GM10248 (cell line): ENCODE measurements at regions of chr3 and their contacts with region 1.

Region 1: DNA sequence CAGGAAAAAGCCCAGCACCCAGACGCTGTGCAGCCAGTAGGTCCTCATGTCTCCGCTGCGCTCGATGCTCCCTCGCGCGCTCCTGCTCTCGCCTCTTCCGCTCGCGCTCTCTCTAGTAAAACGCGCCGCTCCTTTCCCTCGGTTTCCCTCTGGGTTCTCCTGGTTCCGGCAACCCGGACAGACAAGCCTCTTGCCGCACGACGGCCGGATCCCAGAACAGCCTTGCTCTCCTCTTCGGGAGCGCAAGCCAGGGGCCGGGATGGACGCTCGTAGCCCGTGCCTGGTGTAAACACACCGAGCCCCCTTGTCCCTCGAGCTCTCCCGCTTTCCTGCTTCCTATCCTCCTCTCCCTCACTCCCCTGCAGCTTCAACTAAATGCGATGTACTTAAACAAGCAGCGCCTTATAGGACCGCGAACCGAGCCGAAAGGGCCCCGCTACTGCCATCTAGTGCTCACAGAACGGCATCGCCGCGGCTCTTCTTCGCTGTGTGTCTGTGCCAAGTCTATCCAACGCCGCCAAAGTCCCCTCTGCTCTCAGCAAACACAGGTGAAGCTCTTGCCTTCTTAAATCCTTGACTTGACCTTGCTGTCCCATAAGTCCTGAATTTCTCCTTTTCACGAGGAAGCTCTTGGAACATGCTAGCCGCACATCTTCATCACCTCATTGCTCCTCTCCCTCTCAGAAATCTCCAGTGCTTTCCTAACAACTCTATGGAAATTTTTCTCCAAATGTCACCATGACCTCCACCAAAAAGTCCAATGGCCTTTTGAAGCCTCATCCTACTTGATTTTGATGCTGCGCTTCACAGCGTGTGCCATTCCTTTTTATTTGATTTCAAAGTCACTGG is 1037.2 kb downstream of the IGSF11 start:
- DNase-seq: peak; percentile 69
- CTCF ChIP-seq: peak; percentile 93

Region 2: GRCh38 chr3:117977504-117978228 is 19.8 kb before region 1 on chr3:
- CTCF ChIA-PET with region 1: interaction called, 11 read pairs
- POLR2A ChIA-PET with region 1: no interaction called
- DNase-seq: no peak
- CTCF ChIP-seq: no peak

Region 3: DNA sequence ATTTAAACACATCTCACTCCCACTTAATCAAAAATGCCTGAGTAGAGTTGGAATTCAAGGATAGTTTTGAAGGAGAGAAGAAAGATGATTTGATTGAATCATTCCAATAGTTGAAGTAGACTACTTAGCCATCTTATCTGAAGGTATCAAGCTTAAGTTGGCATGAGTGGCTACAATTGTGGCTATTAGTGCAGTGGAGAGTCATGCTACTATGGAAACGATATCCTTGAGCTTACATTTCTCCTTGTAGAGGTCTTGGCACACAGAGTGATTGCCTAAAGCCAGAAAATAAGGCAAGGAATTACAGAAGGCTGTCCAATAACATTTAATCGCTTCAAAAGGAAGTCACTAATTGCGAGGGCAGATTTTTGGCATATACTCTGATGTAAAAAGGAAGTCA is 14.5 kb after region 1 on chr3:
- CTCF ChIA-PET with region 1: interaction called, 16 read pairs
- POLR2A ChIA-PET with region 1: no interaction called
- DNase-seq: no peak
- CTCF ChIP-seq: no peak

Region 4: DNA sequence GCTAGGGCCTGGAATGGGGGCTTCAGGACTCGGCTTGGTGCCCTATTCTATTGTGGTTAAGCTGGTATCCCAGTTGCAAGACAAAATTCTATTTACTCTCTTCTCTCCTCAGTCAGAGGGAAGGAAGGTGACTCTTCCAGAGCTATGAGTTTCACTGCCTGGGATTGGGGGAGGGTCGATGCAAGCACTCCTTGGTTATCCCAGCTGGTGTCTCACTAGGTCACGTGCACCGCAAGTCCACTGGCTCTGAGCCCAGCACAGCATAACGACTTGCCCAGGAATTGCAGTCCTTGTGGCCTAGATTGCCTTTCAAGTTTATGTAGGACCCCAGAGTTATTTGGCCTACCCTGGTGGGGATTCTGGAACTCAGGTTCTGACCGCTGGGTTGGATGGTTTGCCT is 78.4 kb after region 1 on chr3:
- CTCF ChIA-PET with region 1: no interaction called
- POLR2A ChIA-PET with region 1: no interaction called
- DNase-seq: no peak
- CTCF ChIP-seq: no peak

Region 5: DNA sequence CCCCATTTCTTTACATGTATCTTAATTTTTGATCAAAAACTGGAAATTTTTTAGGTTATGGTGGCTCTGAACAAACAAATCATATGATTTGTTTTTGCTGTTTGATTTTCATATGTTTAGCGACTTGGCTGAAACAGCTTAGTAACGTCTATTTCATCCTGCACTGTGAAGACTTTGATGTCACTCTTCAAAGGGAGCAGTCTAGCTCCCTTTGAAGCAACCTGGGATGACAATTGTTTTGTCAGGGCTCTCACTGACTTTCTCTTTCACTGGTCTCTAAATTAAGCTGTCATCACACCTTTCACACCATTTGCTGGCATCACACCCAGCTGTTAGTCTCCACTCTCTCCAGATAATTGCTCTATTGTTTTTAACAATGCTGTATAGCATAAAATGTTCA is 140.4 kb after region 1 on chr3:
- CTCF ChIA-PET with region 1: no interaction called
- POLR2A ChIA-PET with region 1: no interaction called
- DNase-seq: no peak
- CTCF ChIP-seq: no peak

Region 6: GRCh38 chr3:118400886-118401285 is 403.5 kb after region 1 on chr3:
- CTCF ChIA-PET with region 1: no interaction called
- POLR2A ChIA-PET with region 1: no interaction called
- DNase-seq: no peak
- CTCF ChIP-seq: no peak